GM12878 (cell line): ENCODE measurements at regions of chr6 and their contacts with region 1.

Region 1: DNA sequence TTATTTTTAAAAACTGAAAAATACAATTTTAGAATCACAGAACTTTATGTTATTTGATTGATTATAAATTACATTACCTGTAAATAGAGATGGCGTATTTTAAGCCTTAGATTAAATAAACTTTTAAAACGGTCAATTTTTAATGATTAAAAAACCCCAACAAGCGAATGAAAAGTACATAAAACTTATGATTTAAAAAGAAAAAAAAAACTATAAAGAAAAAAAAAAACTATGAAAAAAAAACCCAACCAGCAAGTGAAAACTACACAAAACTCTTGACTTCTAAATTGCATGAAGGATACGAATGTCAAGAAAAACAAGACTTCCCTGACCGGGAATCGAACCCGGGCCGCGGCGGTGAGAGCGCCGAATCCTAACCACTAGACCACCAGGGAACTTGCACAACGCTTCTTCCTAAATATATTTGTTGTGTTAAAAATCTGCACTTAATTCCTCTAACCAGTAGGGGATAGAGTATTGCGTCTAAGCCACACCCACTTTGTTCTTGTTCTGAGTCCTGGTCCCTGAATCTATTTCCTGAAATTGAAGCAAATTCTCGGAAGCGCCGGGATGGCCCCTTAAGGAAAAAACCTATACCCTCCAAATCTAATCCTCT is 10.7 kb upstream of the NCOA7 start:
- DNase-seq: peak; percentile 92
- ATAC-seq: peak; percentile 86
- H3K4me3 ChIP-seq: peak overlapping the region; percentile 73
- H3K27ac ChIP-seq: peak overlapping the region; percentile 91
- H3K4me1 ChIP-seq: peaks cover 4% of the 10 kb centered on the region; the same call in 1 of the 2 replicates
- H3K27me3 ChIP-seq: no peaks in the 10 kb centered on the region
- CTCF ChIP-seq: peak in 1 of 3 experiments; percentile 20; a peak in 1 of 6 replicates
- EP300 ChIP-seq: peak in 1 of 2 experiments; percentile 84; a peak in 1 of 4 replicates
- POLR2A ChIP-seq: no peak
- RAD21 ChIP-seq: no peak

Region 2: DNA sequence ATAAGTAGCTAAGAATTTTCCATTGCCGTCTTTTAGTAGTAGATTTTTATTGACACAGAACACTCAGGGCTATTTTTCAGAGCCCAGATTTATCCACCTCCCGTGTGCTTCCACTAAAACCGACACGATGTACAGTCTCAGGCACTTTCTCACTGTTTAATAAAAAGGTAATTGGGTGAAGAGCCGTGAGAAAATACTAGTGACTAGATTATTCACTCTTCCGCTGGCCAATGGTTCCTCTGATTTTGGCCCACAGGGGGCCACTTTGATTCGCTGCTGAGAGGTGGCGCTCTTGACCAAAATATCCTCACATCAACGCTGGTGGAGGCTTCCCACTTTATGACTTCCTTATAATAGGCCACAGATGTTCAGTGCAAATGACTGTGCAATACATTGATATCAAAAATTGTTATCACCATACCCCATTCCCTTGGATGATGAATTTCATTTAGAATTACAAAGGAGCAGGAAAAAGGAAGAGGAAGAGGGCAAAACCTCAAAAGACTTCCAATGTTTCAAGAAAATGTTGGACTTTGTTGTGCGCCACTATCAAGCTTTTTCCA is 465.9 kb before region 1 on chr6:
- CTCF ChIA-PET with region 1: interaction called, 10 read pairs
- POLR2A ChIA-PET with region 1: interaction called, 7 read pairs
- RAD21 ChIA-PET with region 1: interaction called, 5 read pairs
- SMC1A ChIA-PET with region 1: interaction called, 3 read pairs
- in situ Hi-C with region 1: no loop called
- intact Hi-C with region 1: no loop called
- DNase-seq: no peak
- ATAC-seq: peak; percentile 97
- H3K4me3 ChIP-seq: no peak overlapping the region
- H3K27ac ChIP-seq: no peak overlapping the region
- H3K4me1 ChIP-seq: no peaks in the 10 kb centered on the region
- H3K27me3 ChIP-seq: no peaks in the 10 kb centered on the region
- CTCF ChIP-seq: peak; percentile 76 to 95 (median 88)
- EP300 ChIP-seq: no peak
- POLR2A ChIP-seq: no peak
- RAD21 ChIP-seq: peak; percentile 96

Region 3: GRCh38 chr6:125804264-125804663 is 24.2 kb after region 1 on chr6:
- CTCF ChIA-PET with region 1: interaction called, 30 read pairs
- POLR2A ChIA-PET with region 1: interaction called, 7 read pairs
- RAD21 ChIA-PET with region 1: interaction called, 5 read pairs
- SMC1A ChIA-PET with region 1: interaction called, 16 read pairs
- in situ Hi-C with region 1: no loop called
- intact Hi-C with region 1: no loop called
- DNase-seq: peak; percentile 61
- ATAC-seq: peak; percentile 72
- H3K4me3 ChIP-seq: no peak overlapping the region
- H3K27ac ChIP-seq: peak overlapping the region; percentile 49
- H3K4me1 ChIP-seq: peaks cover 69% of the 10 kb centered on the region
- H3K27me3 ChIP-seq: no peaks in the 10 kb centered on the region
- CTCF ChIP-seq: no peak
- EP300 ChIP-seq: peak; percentile 83 to 98; a peak in 3 of 4 replicates
- POLR2A ChIP-seq: no peak
- RAD21 ChIP-seq: no peak

Region 4: DNA sequence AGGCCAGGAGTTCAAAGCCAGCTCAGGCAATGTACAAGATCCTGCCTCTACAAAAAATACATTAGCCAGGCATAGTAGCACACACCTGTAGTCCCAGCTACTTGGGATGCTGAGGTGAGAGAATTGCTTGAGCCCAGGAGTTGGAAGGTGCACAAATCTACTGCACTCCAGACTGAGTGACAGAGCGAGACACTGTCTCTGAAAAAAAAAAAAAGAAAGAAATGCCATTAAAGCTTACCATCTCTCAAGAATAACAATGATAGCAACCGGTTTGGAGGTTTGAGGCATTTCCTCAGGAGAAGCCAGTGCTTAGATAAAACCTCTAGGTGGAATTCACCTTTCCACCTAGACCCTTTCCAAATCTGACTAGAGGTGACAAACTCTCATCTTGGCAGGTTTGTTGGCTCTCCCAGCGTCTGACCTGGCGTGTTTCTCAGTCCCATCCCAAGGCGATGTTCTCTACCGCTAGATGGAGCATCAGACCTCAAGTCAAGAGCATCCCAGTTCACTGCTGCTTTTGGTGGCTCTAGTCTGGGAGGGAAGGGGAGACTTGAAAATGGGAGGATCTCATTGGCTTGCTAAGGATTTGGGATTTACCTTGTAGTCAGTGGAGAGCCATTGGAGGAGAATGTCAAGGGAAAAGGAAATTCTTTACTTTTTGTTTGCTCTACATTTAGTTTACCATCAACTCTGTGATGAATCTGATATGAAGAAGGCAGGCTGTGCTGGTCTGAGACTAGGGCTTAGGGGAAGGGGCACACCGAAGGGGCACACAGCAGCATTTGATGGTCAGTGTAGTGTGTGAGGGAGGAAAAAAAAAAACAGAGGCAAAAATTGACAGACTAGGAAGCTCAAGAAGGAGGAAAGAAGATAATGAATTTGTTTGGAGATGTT is 78.6 kb after region 1 on chr6:
- CTCF ChIA-PET with region 1: interaction called, 17 read pairs
- POLR2A ChIA-PET with region 1: no interaction called
- RAD21 ChIA-PET with region 1: interaction called, 5 read pairs
- SMC1A ChIA-PET with region 1: interaction called, 9 read pairs
- in situ Hi-C with region 1: no loop called
- intact Hi-C with region 1: no loop called
- DNase-seq: no peak
- ATAC-seq: peak; percentile 91
- H3K4me3 ChIP-seq: no peak overlapping the region
- H3K27ac ChIP-seq: no peak overlapping the region
- H3K4me1 ChIP-seq: no peaks in the 10 kb centered on the region
- H3K27me3 ChIP-seq: no peaks in the 10 kb centered on the region
- CTCF ChIP-seq: peak; percentile 60 to 64 (median 62); a peak in 5 of 6 replicates
- EP300 ChIP-seq: no peak
- POLR2A ChIP-seq: no peak
- RAD21 ChIP-seq: peak; percentile 63

Region 5: GRCh38 chr6:125906158-125906998 is 126.3 kb after region 1 on chr6:
- CTCF ChIA-PET with region 1: interaction called, 29 read pairs
- POLR2A ChIA-PET with region 1: interaction called, 3 read pairs
- RAD21 ChIA-PET with region 1: interaction called, 9 read pairs
- SMC1A ChIA-PET with region 1: interaction called, 14 read pairs
- in situ Hi-C with region 1: no loop called
- intact Hi-C with region 1: no loop called
- DNase-seq: no peak
- ATAC-seq: peak; percentile 55
- H3K4me3 ChIP-seq: no peak overlapping the region
- H3K27ac ChIP-seq: no peak overlapping the region
- H3K4me1 ChIP-seq: peaks cover 16% of the 10 kb centered on the region
- H3K27me3 ChIP-seq: no peaks in the 10 kb centered on the region
- CTCF ChIP-seq: peak; percentile 63 to 94 (median 91)
- EP300 ChIP-seq: no peak
- POLR2A ChIP-seq: no peak
- RAD21 ChIP-seq: peak; percentile 58

Region 6: GRCh38 chr6:125966569-125966968 is 186.5 kb after region 1 on chr6:
- CTCF ChIA-PET with region 1: interaction called, 505 read pairs
- POLR2A ChIA-PET with region 1: no interaction called
- RAD21 ChIA-PET with region 1: interaction called, 11 read pairs
- SMC1A ChIA-PET with region 1: interaction called, 15 read pairs
- in situ Hi-C with region 1: no loop called
- intact Hi-C with region 1: no loop called
- DNase-seq: no peak
- ATAC-seq: no peak
- H3K4me3 ChIP-seq: no peak overlapping the region
- H3K27ac ChIP-seq: no peak overlapping the region
- H3K4me1 ChIP-seq: no peaks in the 10 kb centered on the region
- H3K27me3 ChIP-seq: no peaks in the 10 kb centered on the region
- CTCF ChIP-seq: no peak
- EP300 ChIP-seq: no peak
- POLR2A ChIP-seq: no peak
- RAD21 ChIP-seq: no peak

Region 7: DNA sequence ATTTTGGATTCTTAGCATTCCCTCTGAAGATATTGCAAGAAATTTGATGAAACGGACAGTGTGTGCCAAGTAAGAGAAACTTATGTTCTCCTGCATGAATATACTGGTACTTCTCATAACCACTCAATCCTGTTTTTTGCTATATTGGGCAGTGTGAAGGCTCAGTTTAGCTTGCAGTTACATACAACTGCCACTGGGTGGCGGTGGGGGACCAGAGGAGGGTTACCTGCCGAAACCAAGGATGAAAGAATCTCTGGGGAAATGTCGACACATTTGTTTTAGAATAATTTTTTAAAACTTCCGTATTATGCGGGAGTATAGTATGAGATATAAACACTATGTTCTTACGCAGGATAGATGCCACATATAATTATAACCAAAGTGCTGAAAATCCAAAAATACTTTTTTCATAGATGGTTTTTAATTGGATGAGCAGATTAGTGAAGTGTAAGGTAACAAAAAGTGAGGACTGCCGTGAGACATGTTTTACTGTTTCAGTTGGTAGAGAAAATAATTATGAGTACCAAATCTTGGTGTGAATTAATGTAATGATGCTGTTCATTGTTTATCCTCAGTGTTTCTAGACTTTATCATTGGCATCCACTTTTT is 216.0 kb after region 1 on chr6:
- CTCF ChIA-PET with region 1: interaction called, 23 read pairs
- POLR2A ChIA-PET with region 1: no interaction called
- RAD21 ChIA-PET with region 1: interaction called, 13 read pairs
- SMC1A ChIA-PET with region 1: interaction called, 9 read pairs
- in situ Hi-C with region 1: no loop called
- intact Hi-C with region 1: no loop called
- DNase-seq: peak; percentile 28
- ATAC-seq: peak; percentile 90
- H3K4me3 ChIP-seq: no peak overlapping the region
- H3K27ac ChIP-seq: no peak overlapping the region
- H3K4me1 ChIP-seq: no peaks in the 10 kb centered on the region
- H3K27me3 ChIP-seq: no peaks in the 10 kb centered on the region
- CTCF ChIP-seq: peak; percentile 94 to 96 (median 95)
- EP300 ChIP-seq: no peak
- POLR2A ChIP-seq: no peak
- RAD21 ChIP-seq: peak; percentile 87